Panc1 (cell line): ENCODE measurements at regions of chr3 and their contacts with region 1.

Region 1: GRCh38 chr3:168095611-168096209 is at the start of gene GOLIM4:
- DNase-seq: peak; percentile 76
- ATAC-seq: peak; percentile 96
- H3K4me3 ChIP-seq: peak within 1 kb of the TSS; percentile 81 to 85
- H3K27ac ChIP-seq: peak within 1 kb of the TSS; percentile 87
- H3K4me1 ChIP-seq: peaks cover 39% of the 10 kb centered on the region
- H3K27me3 ChIP-seq: no peaks in the 10 kb centered on the region
- CTCF ChIP-seq: no peak; the same call in 1 of the 2 replicates
- total RNA-seq, gene GOLIM4: 35.4 TPM

Region 2: DNA sequence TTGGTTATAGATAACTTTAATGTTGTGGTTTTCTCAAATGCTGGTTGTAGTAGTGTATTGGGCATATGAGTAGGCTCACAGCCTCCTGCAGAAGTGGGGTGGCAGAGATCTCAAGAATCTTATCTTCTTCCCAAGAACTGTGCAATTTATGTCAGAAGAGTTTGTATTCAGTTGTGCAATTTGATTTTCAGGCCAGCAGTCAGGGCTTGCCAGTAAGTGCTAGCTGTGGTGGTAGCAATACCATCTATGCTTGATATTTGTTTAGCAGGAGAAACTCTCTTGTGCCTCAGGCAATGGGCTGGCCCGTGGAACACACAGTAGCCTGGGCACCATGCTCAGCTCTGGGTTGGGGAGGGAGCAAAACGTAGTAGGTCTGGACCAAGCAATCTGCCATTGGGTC is 58.4 kb after region 1 on chr3:
- CTCF ChIA-PET with region 1: no interaction called
- POLR2A ChIA-PET with region 1: no interaction called
- in situ Hi-C with region 1: no loop called
- intact Hi-C with region 1: no loop called
- DNase-seq: no peak
- ATAC-seq: no peak
- H3K4me3 ChIP-seq: no peak overlapping the region
- H3K27ac ChIP-seq: no peak overlapping the region
- H3K4me1 ChIP-seq: no peaks in the 10 kb centered on the region
- H3K27me3 ChIP-seq: no peaks in the 10 kb centered on the region
- CTCF ChIP-seq: no peak

Region 3: DNA sequence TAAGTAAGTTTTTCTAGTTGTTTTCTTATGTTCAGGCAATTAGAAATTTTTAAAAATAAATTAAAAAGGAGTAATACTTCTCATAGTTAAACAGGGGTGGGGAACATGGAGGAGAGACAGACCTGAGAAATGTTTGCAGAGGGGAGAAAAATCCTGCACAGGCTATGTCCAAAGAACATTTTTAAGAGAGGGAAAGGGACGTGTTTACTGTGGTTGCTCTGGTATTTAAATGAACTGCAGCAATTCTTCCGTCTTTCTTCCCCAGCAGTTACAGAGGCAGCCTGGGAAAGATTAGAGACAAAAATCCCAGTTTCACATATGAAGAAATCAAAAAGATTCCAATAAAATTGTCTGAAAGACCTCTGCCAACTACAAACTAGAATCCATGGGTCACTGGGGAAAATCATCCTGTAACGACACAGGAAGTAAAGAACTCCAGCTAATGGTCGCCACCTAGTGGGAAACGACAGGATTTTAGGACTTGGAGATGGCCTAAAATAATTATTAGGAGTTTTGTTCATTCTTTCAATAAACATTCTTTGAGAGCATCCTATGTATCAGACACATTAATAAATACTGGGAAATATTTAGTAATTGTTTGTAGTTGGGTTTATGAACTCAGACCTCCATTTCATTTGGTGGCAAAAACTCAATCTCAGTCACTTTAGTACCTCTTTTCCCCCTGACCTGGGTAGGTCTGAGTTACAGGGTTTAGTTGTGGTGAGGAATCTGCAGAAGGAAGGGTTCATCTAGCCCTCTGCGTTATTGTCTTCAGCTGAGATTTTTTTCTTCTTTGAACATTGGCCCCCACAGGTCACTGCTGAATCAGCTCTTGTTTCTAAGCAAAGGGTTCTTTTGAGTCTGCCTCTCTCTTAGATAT is 69.9 kb after region 1 on chr3:
- CTCF ChIA-PET with region 1: no interaction called
- POLR2A ChIA-PET with region 1: no interaction called
- in situ Hi-C with region 1: no loop called
- intact Hi-C with region 1: loop called (anchors 1 kb)
- DNase-seq: peak; percentile 59
- ATAC-seq: peak; percentile 92
- H3K4me3 ChIP-seq: peak overlapping the region in 1 of 2 experiments; percentile 10; a peak in 1 of 4 replicates
- H3K27ac ChIP-seq: no peak overlapping the region
- H3K4me1 ChIP-seq: no peaks in the 10 kb centered on the region
- H3K27me3 ChIP-seq: no peaks in the 10 kb centered on the region
- CTCF ChIP-seq: peak; percentile 78